Heart left ventricle (tissue), 16 donors: ENCODE measurements at regions of chr10 and their contacts with region 1.

Region 1: GRCh38 chr10:111076191-111076681 is 593 bp upstream of the ADRA2A start:
- DNase-seq: peak; percentile 39 to 84 (median 52)
- ATAC-seq: peak; percentile 66 to 89 (median 83)
- H3K4me3 ChIP-seq: peak overlapping the region; percentile 25 to 63 (median 51)
- H3K27ac ChIP-seq: no peak overlapping the region
- H3K4me1 ChIP-seq: peaks cover 5 to 37% (median 24%) of the 10 kb centered on the region in 12 donors
- H3K27me3 ChIP-seq: peaks cover 29 to 92% (median 67%) of the 10 kb centered on the region in 9 donors
- CTCF ChIP-seq: peak; percentile 62 to 82 (median 73)
- POLR2A ChIP-seq: no peak

Region 2: DNA sequence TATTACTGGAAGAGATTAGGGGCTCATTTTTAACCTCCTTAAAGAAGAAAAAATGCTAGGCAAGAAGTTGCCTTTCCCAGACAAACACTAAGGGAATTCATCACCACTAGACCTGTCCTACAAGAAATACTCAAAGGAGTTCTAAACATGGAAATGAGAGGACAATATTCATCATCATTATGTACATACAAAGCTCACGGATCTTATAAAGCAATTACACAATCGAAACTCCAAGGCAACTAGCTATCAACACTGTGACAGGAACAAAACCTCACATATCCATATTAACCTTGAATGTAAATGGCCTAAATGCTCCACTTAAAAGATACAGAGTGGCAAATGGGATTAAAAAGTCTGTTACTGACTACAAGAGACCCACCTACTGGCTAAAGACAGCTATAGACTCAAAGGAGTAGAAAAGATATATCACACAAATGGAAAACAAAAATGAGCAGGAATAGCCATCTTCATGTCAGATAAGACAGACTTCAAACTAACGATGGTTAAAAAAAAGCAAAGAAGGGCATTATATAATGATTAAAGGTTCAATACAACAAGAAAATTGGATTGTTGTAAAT is 247.2 kb after region 1 on chr10:
- intact Hi-C with region 1: loop called in 1 of 10 experiments (anchors 10 kb)
- DNase-seq: no peak
- ATAC-seq: no peak
- H3K4me3 ChIP-seq: no peak overlapping the region
- H3K27ac ChIP-seq: no peak overlapping the region
- H3K4me1 ChIP-seq: no peaks in the 10 kb centered on the region
- H3K27me3 ChIP-seq: peaks cover 0 to 16% (median 0%) of the 10 kb centered on the region in 9 donors
- CTCF ChIP-seq: no peak
- POLR2A ChIP-seq: no peak

Region 3: DNA sequence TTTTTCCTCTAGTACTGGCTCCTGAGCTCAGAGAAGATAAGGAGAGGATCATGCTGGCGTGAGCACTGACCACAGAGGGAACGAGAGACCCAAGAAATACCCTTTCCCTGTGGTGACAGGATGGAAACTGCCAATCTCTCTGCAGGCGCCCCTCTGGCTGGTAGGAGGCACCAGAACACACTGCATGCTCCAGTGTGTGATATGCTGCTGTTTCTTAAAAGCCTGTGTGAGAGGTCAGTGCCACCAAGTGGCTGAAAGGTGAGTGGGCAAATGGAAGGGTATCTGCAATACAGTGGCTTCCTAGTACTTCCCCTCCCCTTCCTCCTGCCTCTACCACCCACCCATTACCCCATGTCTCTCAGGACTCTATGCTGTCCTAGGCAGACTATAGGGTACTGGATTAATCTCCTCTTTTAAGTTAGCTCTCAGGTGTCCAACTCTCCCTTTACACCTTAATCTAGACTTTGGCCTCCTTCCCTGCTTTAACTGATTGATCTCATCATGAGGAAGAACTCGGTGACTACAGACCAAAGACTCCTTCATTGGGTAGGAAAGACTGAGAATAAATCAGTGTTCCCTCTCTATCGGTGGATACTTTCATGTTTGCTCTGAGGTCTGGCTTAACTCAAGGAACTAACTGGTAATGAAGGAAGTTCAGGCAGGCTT is 284.2 kb after region 1 on chr10:
- intact Hi-C with region 1: loop called in 5 of 10 experiments (anchors 2 to 10 kb)
- DNase-seq: peak in 3 of 5 donors; percentile 6 to 32 (median 21)
- ATAC-seq: peak; percentile 73 to 91 (median 88)
- H3K4me3 ChIP-seq: no peak overlapping the region
- H3K27ac ChIP-seq: no peak overlapping the region
- H3K4me1 ChIP-seq: no peaks in the 10 kb centered on the region
- H3K27me3 ChIP-seq: peaks cover 0 to 5% (median 0%) of the 10 kb centered on the region in 9 donors
- CTCF ChIP-seq: peak in 11 of 12 donors; percentile 29 to 62 (median 45)
- POLR2A ChIP-seq: no peak

Region 4: GRCh38 chr10:111598436-111599059 is 522.3 kb after region 1 on chr10:
- intact Hi-C with region 1: loop called in 6 of 10 experiments (anchors 2 to 10 kb)
- DNase-seq: peak in 3 of 5 donors; percentile 26 to 39 (median 29)
- ATAC-seq: peak in 3 of 4 donors; percentile 65 to 70 (median 67)
- H3K4me3 ChIP-seq: no peak overlapping the region
- H3K27ac ChIP-seq: no peak overlapping the region
- H3K4me1 ChIP-seq: no peaks in the 10 kb centered on the region
- H3K27me3 ChIP-seq: peaks cover 0 to 3% (median 0%) of the 10 kb centered on the region in 9 donors
- CTCF ChIP-seq: peak; percentile 64 to 83 (median 74)
- POLR2A ChIP-seq: no peak

Region 5: DNA sequence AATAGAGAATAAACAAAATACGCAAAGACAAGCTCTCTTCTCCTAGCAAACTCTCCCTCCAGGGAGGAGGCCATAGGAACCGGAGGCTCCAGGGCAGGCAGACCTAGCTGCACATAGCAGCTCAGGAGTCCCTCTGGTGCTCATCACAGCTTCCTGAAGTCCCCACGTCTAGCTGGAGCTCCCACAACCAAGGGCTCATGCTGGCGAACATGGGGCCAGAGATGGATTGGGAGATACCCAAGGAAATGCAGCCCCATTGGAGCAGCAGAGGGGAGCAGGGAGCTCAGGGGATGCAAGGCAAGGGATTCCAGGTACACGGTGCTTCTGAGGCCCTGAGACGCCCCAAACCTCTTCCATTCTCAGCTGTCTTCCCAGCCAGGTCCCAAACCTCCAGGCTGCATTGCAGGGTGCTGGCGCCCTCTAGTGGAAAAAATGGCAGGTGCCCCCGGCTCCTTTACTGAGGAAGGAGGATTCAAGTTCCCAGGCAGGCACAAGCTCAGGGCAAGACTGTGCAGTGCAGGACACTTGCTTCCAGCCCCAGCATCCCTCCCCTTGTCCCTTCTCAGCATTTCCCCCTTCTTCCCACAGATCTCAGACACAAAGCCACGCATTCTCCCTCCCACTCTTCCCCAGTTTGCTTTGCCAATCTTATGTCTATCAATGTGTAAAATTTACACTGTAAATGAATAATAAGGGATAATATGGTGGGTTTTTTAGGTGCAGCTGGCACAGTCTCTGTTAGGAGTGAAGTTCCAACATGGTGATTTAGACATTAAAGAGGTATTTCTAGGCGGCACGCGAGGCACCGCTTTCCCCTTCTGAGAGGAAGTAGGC is 1061.1 kb after region 1 on chr10:
- intact Hi-C with region 1: loop called in 2 of 10 experiments (anchors 5 kb)
- DNase-seq: peak; percentile 44 to 84 (median 65)
- ATAC-seq: peak; percentile 58 to 79 (median 70)
- H3K4me3 ChIP-seq: no peak overlapping the region
- H3K27ac ChIP-seq: no peak overlapping the region
- H3K4me1 ChIP-seq: peaks cover 0 to 4% (median 0%) of the 10 kb centered on the region in 12 donors
- H3K27me3 ChIP-seq: no peaks in the 10 kb centered on the region
- CTCF ChIP-seq: peak; percentile 72 to 95 (median 88)
- POLR2A ChIP-seq: no peak